Heart left ventricle (tissue), 16 donors: ENCODE measurements at regions of chr7 and their contacts with region 1.

Region 1: GRCh38 chr7:15555381-15555859 is 6.4 kb downstream of the AGMO start:
- DNase-seq: no peak
- ATAC-seq: peak in 1 of 4 donors; percentile 30
- H3K4me3 ChIP-seq: peak overlapping the region in 1 of 12 donors; percentile 14
- H3K27ac ChIP-seq: no peak overlapping the region
- H3K4me1 ChIP-seq: peaks cover 0 to 32% (median 1%) of the 10 kb centered on the region in 12 donors
- H3K27me3 ChIP-seq: no peaks in the 10 kb centered on the region
- CTCF ChIP-seq: peak in 8 of 12 donors; percentile 27 to 57 (median 46)
- POLR2A ChIP-seq: no peak

Region 2: GRCh38 chr7:15305002-15305600 is 250.3 kb before region 1 on chr7:
- intact Hi-C with region 1: loop called in 1 of 10 experiments (anchors 5 kb)
- DNase-seq: peak in 4 of 5 donors; percentile 35 to 46 (median 42)
- ATAC-seq: peak in 1 of 4 donors; percentile 38
- H3K4me3 ChIP-seq: no peak overlapping the region
- H3K27ac ChIP-seq: no peak overlapping the region
- H3K4me1 ChIP-seq: no peaks in the 10 kb centered on the region
- H3K27me3 ChIP-seq: no peaks in the 10 kb centered on the region
- CTCF ChIP-seq: peak; percentile 54 to 84 (median 76)
- POLR2A ChIP-seq: no peak

Region 3: DNA sequence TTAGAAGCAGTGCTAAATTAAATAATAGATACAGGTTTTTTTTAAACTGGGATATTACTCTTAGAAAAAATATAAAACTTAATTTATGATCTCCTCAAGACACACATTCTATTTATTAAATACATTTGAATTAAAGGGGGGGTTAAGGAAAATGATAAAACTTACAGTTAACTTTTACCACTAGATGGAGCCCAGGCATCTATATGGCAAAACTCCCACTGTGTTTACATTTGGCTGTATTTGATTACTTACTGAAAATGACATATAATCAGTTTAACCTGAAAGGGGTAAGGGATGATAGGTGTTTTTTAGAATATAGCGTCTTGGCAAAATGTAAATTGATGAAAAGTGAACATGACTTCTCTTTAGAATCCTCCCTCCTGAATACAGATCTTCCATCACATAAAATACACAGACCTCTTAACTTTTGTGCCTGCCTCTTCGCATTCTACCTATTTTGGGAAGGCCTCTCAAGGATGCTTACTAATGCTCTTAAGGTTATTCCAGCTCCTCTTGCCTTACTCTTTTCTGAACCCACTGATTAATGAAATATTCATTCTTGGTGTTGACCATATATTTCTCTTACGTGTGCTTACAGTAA is 229.3 kb before region 1 on chr7:
- intact Hi-C with region 1: loop called in 9 of 10 experiments (anchors 5 to 10 kb)
- DNase-seq: no peak
- ATAC-seq: no peak
- H3K4me3 ChIP-seq: no peak overlapping the region
- H3K27ac ChIP-seq: no peak overlapping the region
- H3K4me1 ChIP-seq: peaks cover 0 to 4% (median 0%) of the 10 kb centered on the region in 12 donors
- H3K27me3 ChIP-seq: no peaks in the 10 kb centered on the region
- CTCF ChIP-seq: peak; percentile 35 to 76 (median 62)
- POLR2A ChIP-seq: no peak

Region 4: GRCh38 chr7:15334536-15335263 is 220.7 kb before region 1 on chr7:
- intact Hi-C with region 1: loop called in 8 of 10 experiments (anchors 5 to 10 kb)
- DNase-seq: no peak
- ATAC-seq: no peak
- H3K4me3 ChIP-seq: no peak overlapping the region
- H3K27ac ChIP-seq: no peak overlapping the region
- H3K4me1 ChIP-seq: no peaks in the 10 kb centered on the region
- H3K27me3 ChIP-seq: no peaks in the 10 kb centered on the region
- CTCF ChIP-seq: no peak
- POLR2A ChIP-seq: no peak

Region 5: GRCh38 chr7:15972862-15973275 is 417.4 kb after region 1 on chr7:
- intact Hi-C with region 1: loop called in 1 of 10 experiments (anchors 10 kb)
- DNase-seq: peak in 3 of 5 donors; percentile 19 to 29 (median 23)
- ATAC-seq: no peak
- H3K4me3 ChIP-seq: no peak overlapping the region
- H3K27ac ChIP-seq: peak overlapping the region in 1 of 12 donors; percentile 19
- H3K4me1 ChIP-seq: peaks cover 0 to 14% (median 0%) of the 10 kb centered on the region in 12 donors
- H3K27me3 ChIP-seq: no peaks in the 10 kb centered on the region
- CTCF ChIP-seq: no peak
- POLR2A ChIP-seq: no peak